ENCODE measurements at regions of chr4 and their contacts with region 1.

Region 1: GRCh38 chr4:169133932-169134331 is 123.9 kb upstream of the CBR4 start:
- DNase-seq: peak in 1 of 2 donors; percentile 68
- H3K4me3 ChIP-seq: peak overlapping the region in 1 of 2 donors; percentile 17
- H3K27ac ChIP-seq: peak overlapping the region; percentile 65 to 81
- H3K4me1 ChIP-seq: peaks cover 2 to 33% of the 10 kb centered on the region in 2 donors
- H3K27me3 ChIP-seq: no peaks in the 10 kb centered on the region
- CTCF ChIP-seq: no peak

Region 2: DNA sequence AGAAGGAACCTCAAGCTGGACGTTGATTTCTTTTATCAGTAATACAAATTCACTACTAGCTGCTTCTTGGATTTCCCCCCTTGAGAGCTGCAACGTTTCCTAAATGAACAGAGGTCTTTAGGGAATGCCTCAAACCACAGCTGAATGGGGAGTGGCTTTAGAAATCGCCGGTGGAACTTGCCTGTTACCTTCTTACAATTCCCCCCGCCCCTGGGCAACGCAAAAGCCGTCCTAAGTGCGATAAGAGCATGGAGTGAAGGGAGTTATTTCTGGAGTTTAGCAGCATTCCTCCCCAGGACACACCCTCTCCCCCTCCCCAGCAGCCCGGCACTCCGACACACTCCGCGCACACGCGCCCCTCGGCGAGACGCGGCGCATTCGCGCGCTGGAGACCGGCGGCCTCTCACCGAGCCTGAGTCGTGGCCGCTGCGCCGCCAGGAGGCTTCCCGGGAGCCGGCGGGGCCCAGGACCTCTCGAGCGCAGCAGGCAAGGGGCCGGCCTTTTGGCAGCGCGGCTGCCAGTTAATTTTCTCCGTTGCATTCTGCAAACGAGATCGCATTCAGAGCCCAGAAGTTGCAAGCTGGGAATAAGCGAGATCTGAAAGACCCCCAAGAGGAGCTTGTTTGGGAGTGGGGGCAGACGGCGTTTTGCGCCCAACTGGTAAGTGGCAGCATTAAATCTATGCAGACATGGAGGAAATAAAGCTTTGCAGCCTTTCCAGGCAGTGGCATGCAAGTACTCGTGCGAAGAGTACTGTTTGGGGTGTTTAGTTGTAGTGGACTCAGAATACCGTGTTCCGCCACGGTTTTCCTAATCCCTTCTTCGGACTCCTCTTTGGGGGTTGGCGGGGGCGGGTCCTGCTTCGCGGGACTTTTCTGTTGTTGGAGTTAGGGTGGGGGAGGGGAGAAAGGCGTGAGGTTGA is 502.4 kb before region 1 on chr4:
- intact Hi-C with region 1: no loop called
- DNase-seq: peak in 1 of 2 donors; percentile 73
- H3K4me3 ChIP-seq: peak overlapping the region; percentile 69 to 72
- H3K27ac ChIP-seq: peak overlapping the region; percentile 70 to 81
- H3K4me1 ChIP-seq: peaks cover 4 to 25% of the 10 kb centered on the region in 2 donors
- H3K27me3 ChIP-seq: no peaks in the 10 kb centered on the region
- CTCF ChIP-seq: peak; percentile 40 to 50 (median 47)

Region 3: DNA sequence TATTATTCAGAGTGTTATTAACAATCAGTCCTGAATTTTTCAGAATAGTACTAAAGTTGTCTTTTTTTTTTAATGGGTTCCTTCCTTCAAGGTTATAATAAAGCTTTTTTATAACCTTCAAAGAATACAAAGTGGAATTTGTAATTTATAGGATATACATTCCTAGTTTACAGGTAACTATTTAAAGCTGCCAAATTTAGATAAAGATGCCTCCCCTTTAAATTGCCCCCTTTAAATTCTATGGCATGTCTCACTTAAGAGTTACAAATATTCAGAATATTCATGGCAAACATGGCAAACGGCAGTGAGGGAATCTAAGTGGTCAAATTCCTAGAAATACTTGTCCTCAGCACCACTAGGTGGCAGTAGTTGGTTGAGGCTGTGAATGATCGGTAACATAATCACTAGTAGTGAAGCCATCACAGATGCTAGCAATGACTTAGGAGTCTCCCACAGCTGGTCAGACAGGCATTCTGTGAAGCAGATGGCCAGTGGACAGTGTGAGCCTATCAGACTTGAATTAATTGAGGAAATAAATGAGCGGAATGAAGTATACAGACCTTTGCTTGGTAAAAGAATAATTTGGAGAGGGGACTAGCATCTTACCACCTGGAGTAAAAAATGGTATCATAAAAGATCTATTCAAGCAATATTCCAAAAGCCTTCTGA is 210.3 kb before region 1 on chr4:
- intact Hi-C with region 1: no loop called
- DNase-seq: no peak
- H3K4me3 ChIP-seq: no peak overlapping the region
- H3K27ac ChIP-seq: no peak overlapping the region
- H3K4me1 ChIP-seq: no peaks in the 10 kb centered on the region
- H3K27me3 ChIP-seq: no peaks in the 10 kb centered on the region
- CTCF ChIP-seq: peak; percentile 50 to 69 (median 61)

Region 4: DNA sequence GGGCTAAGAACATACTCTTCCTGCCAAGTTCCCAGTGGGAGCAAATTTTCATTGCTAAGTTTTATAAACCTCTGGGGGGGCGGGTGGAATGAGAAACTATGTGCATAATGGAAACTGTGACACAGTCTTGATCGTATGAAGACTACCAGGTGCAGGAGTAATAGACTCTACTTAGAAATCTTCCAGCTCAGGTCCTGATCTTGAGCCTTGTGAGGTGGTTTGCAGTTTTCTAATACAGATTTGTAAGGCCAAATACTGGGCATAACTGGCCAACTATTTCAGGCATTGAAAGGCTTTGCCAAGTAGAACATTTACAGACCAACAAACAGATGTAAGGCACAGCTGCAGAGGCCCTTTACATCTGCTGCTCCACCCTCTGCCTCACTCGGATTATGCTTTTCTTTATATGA is 34.2 kb before region 1 on chr4:
- intact Hi-C with region 1: loop called (anchors 2 kb)
- DNase-seq: no peak
- H3K4me3 ChIP-seq: no peak overlapping the region
- H3K27ac ChIP-seq: peak overlapping the region; percentile 72 to 79
- H3K4me1 ChIP-seq: peaks cover 7 to 20% of the 10 kb centered on the region in 2 donors
- H3K27me3 ChIP-seq: no peaks in the 10 kb centered on the region
- CTCF ChIP-seq: no peak